ENCODE measurements at regions of chr19 and their contacts with region 1.

Region 1: DNA sequence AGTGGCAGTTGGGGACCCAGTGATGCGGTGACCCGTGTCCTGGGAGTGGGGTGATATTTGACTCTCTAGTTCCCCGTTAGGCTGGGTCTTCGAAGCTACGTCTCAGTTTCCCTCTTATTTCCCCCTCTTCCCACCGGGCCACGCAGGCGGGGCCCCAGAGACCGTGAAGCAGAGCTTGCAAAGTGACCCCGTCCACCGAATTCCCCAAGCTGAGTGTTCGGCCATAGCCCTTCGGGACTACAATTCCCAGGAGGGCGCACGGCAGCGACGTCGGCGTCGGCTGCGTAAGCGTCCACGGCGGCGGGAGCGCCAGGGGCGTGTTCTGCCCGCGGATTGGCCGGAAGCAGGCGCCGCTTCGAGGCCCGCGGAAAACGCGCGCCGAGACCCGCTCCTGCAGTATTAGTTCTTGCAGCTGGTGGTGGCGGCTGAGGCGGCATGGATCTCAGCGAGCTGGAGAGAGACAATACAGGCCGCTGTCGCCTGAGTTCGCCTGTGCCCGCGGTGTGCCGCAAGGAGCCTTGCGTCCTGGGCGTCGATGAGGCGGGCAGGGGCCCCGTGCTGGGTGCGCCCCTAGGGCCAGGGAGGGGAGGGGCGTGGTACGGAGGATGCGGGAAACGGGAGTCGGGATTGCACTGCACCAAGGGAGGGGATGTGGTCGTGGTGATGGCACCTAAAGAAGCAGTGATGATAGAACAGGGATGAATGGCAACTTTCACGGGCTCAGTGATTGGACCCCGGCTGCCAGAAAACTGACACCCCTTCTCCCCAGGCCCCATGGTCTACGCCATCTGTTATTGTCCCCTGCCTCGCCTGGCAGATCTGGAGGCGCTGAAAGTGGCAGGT is at the start of gene RNASEH2A:
- DNase-seq: peak; percentile 82 to 86 (median 84)
- H3K4me3 ChIP-seq: peak within 1 kb of the TSS; percentile 53 to 84
- H3K4me3 Mint-ChIP-seq: peak within 1 kb of the TSS; percentile 75 to 98 (median 90)
- H3K27ac ChIP-seq: peak within 1 kb of the TSS; percentile 63
- H3K27ac Mint-ChIP-seq: peak within 1 kb of the TSS; percentile 75 to 94 (median 89)
- H3K4me1 ChIP-seq: peaks cover 24% of the 10 kb centered on the region
- H3K4me1 Mint-ChIP-seq: peaks cover 15 to 33% (median 22%) of the 10 kb centered on the region in 4 donors
- H3K27me3 ChIP-seq: no peaks in the 10 kb centered on the region
- H3K27me3 Mint-ChIP-seq: no peaks in the 10 kb centered on the region
- total RNA-seq, gene RNASEH2A: 10.5 to 12.6 TPM

Region 2: DNA sequence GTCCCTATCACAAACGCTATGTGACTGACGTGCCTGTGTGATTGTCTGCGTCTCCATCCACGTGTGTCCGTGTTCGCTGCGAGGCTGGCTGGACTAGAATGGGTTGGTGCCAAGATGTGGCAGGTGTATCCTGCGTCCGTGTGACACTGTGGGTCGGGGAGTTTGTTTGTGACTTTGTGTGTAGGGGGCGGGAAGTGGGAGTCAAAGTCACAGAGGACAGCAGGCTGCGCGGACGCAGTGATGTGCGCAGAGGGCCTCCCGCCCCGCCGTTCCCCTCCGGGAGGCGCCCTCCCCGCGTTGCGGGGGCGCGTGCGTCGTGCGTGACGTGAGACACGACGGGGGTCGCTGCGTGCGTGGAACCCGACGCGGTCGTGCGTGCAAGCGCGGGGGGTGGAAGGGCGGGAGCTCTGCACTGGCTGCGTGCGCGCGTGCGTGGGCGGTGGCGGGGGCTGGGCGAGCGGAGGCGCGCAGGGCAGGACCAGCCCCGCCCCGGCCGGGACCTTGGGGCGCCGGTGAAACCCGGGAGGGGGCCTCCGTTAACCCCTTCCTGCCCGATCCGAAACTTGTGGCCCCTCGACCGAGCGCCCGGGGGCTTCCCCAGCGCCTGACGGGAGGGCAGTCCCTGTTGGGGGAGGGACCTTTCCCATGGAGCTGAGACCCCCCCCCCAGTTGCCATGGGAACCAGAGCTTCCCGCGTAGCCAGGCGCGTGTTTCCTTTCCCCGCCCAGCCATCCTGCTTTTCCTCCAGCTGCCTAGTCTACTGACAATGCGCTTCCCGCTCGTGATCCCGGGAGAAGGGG is 24.0 kb before region 1 on chr19:
- CTCF ChIA-PET with region 1: interaction called, 906 read pairs
- POLR2A ChIA-PET with region 1: interaction called, 1,162 read pairs
- intact Hi-C with region 1: no loop called
- DNase-seq: peak; percentile 96 to 99 (median 98)
- H3K4me3 ChIP-seq: peak overlapping the region; percentile 40 to 71
- H3K4me3 Mint-ChIP-seq: peak overlapping the region; percentile 79 to 95 (median 88)
- H3K27ac ChIP-seq: peak overlapping the region; percentile 99
- H3K27ac Mint-ChIP-seq: peak overlapping the region in 2 of 7 donors; percentile 98 to 99
- H3K4me1 ChIP-seq: peaks cover 71% of the 10 kb centered on the region
- H3K4me1 Mint-ChIP-seq: peaks cover 20 to 44% (median 30%) of the 10 kb centered on the region in 4 donors
- H3K27me3 ChIP-seq: no peaks in the 10 kb centered on the region
- H3K27me3 Mint-ChIP-seq: no peaks in the 10 kb centered on the region

Region 3: GRCh38 chr19:12825254-12826131 is 19.0 kb after region 1 on chr19:
- CTCF ChIA-PET with region 1: no interaction called
- POLR2A ChIA-PET with region 1: no interaction called
- intact Hi-C with region 1: no loop called
- DNase-seq: no peak
- H3K4me3 ChIP-seq: no peak overlapping the region
- H3K4me3 Mint-ChIP-seq: peak overlapping the region in 1 of 8 donors; percentile 66
- H3K27ac ChIP-seq: no peak overlapping the region
- H3K27ac Mint-ChIP-seq: peak overlapping the region in 1 of 7 donors; percentile 26
- H3K4me1 ChIP-seq: peaks cover 8% of the 10 kb centered on the region
- H3K4me1 Mint-ChIP-seq: peaks cover 3 to 11% (median 5%) of the 10 kb centered on the region in 4 donors
- H3K27me3 ChIP-seq: peaks cover 32% of the 10 kb centered on the region
- H3K27me3 Mint-ChIP-seq: peaks cover 33 to 41% of the 10 kb centered on the region in 2 donors